A673 (cell line): ENCODE measurements at regions of chr17 and their contacts with region 1.

Region 1: GRCh38 chr17:40909351-40909750 is 24.3 kb upstream of the KRT20 start:
- DNase-seq: peak; percentile 93
- H3K4me3 ChIP-seq: no peak overlapping the region
- H3K27ac ChIP-seq: peak overlapping the region; percentile 87
- H3K4me1 ChIP-seq: peaks cover 32% of the 10 kb centered on the region
- H3K27me3 ChIP-seq: no peaks in the 10 kb centered on the region
- CTCF ChIP-seq: peak; percentile 64

Region 2: GRCh38 chr17:40857535-40857934 is 51.8 kb before region 1 on chr17:
- CTCF ChIA-PET with region 1: no interaction called
- POLR2A ChIA-PET with region 1: no interaction called
- intact Hi-C with region 1: loop called (anchors 5 kb)
- DNase-seq: peak; percentile 51
- H3K4me3 ChIP-seq: no peak overlapping the region
- H3K27ac ChIP-seq: peak overlapping the region; percentile 60
- H3K4me1 ChIP-seq: peaks cover 11% of the 10 kb centered on the region
- H3K27me3 ChIP-seq: no peaks in the 10 kb centered on the region
- CTCF ChIP-seq: no peak

Region 3: DNA sequence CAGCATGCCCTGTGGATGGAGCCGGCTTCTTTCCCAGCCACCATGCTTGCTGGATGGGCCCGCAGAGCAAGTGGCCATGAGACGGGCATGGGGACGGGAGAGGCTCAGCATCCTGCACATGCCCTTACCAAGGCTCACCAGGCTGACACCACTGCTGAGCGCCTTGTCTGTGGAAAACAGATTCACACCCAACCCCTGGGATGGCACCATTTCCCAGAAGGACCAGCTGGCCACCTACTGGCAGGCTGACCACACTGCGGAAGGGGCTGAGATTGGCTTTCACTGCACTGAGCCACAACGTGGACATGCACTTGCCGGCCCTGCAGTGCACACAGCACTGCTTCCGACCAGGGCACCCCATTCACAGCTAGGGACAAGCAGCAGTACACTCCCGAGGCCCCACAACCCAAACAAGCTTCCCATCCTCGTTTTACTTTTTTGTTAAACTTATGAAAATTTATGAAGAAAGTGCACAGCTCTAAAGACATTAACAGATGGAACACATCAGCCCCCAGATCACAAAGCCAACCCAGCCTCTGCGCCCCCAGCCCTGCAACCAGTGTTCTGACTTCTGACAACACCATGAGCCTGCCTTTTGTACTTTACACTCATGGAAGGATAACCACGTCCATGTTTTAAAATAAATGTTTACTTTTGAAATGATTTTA is 420.1 kb after region 1 on chr17:
- CTCF ChIA-PET with region 1: no interaction called
- POLR2A ChIA-PET with region 1: no interaction called
- intact Hi-C with region 1: loop called (anchors 2 kb)
- DNase-seq: peak; percentile 59
- H3K4me3 ChIP-seq: no peak overlapping the region
- H3K27ac ChIP-seq: no peak overlapping the region
- H3K4me1 ChIP-seq: no peaks in the 10 kb centered on the region
- H3K27me3 ChIP-seq: no peaks in the 10 kb centered on the region
- CTCF ChIP-seq: peak; percentile 60

Region 4: GRCh38 chr17:41665566-41666236 is 756.4 kb after region 1 on chr17:
- CTCF ChIA-PET with region 1: no interaction called
- POLR2A ChIA-PET with region 1: no interaction called
- intact Hi-C with region 1: loop called (anchors 2 kb)
- DNase-seq: peak; percentile 81
- H3K4me3 ChIP-seq: peak overlapping the region; percentile 43
- H3K27ac ChIP-seq: no peak overlapping the region
- H3K4me1 ChIP-seq: peaks cover 5% of the 10 kb centered on the region
- H3K27me3 ChIP-seq: no peaks in the 10 kb centered on the region
- CTCF ChIP-seq: peak; percentile 77